ENCODE measurements at regions of chr20 and their contacts with region 1.

Region 1: GRCh38 chr20:44683263-44684046 is 31.7 kb upstream of the CCN5 start:
- DNase-seq: no peak
- ATAC-seq: no peak
- H3K4me3 ChIP-seq: no peak overlapping the region
- H3K27ac ChIP-seq: peak overlapping the region; percentile 84; the same call in 1 of the 2 replicates
- H3K4me1 ChIP-seq: peaks cover 16% of the 10 kb centered on the region
- H3K27me3 ChIP-seq: no peaks in the 10 kb centered on the region
- CTCF ChIP-seq: no peak

Region 2: DNA sequence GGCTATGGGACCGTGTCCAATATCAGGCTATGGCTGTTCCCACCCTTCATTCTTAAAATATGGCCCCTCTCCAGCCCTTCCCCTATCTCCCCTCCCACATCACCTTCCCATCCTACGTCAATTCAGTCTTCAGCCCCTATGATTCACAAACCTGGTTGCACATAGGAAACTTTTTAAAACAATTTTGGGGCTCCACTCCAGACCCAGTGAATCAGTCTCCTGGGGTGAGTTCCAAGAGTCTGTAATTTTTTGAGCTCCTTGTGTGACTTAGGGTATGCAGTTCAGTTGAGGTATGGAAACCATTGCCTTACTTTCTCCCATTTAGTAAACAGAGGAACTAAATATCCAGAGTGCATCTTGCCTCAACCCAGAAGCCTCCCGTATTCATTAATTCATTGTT is 322.4 kb before region 1 on chr20:
- CTCF ChIA-PET with region 1: no interaction called
- POLR2A ChIA-PET with region 1: no interaction called
- in situ Hi-C with region 1: no loop called
- intact Hi-C with region 1: no loop called
- DNase-seq: no peak
- ATAC-seq: no peak
- H3K4me3 ChIP-seq: no peak overlapping the region
- H3K27ac ChIP-seq: no peak overlapping the region
- H3K4me1 ChIP-seq: no peaks in the 10 kb centered on the region
- H3K27me3 ChIP-seq: no peaks in the 10 kb centered on the region; the same call in 1 of the 2 replicates
- CTCF ChIP-seq: no peak

Region 3: DNA sequence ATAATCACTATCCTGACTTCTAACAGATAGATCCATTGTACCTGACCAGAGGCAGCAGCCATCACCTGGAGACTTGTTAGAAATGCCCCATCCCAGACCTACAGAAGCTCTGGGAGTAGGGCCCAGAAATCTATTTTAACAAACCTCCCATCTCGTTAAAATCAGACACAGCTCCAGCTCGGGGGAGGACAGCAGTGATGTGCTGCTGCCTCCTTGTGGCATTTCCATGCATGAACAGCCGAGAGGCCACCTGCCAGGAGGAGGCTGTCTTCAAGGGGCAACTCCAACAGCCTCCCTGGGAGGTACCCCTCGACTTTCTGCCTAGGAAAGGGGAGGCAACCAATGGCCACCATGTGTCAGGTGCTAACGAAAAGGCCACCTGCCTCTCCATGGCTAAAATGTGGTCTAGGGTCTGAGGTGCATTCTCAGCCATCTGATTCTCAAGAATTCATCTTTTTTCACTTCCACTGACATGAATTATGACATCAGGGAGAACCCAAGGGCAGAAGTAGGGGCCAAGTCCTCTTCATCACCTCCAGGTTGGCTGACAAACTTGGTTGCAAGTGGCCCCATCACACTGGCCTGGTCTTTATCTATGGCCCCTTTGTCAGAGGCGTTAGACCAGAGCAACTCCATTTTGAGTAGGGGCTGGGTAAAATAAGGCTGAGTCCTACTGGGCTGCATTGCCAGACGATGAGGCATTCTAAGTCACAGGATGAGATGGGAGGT is 50.0 kb after region 1 on chr20:
- CTCF ChIA-PET with region 1: interaction called, 33 read pairs
- POLR2A ChIA-PET with region 1: interaction called, 3 read pairs
- in situ Hi-C with region 1: no loop called
- intact Hi-C with region 1: loop called (anchors 1 kb)
- DNase-seq: peak; percentile 83
- ATAC-seq: peak; percentile 41
- H3K4me3 ChIP-seq: no peak overlapping the region
- H3K27ac ChIP-seq: peak overlapping the region; percentile 99
- H3K4me1 ChIP-seq: peaks cover 53% of the 10 kb centered on the region
- H3K27me3 ChIP-seq: no peaks in the 10 kb centered on the region
- CTCF ChIP-seq: peak; percentile 98

Region 4: GRCh38 chr20:44861531-44862006 is 178.1 kb after region 1 on chr20:
- CTCF ChIA-PET with region 1: no interaction called
- POLR2A ChIA-PET with region 1: no interaction called
- in situ Hi-C with region 1: no loop called
- intact Hi-C with region 1: loop called (anchors 10 kb)
- DNase-seq: no peak
- ATAC-seq: peak; percentile 80
- H3K4me3 ChIP-seq: no peak overlapping the region
- H3K27ac ChIP-seq: no peak overlapping the region
- H3K4me1 ChIP-seq: no peaks in the 10 kb centered on the region
- H3K27me3 ChIP-seq: no peaks in the 10 kb centered on the region
- CTCF ChIP-seq: no peak

Region 5: DNA sequence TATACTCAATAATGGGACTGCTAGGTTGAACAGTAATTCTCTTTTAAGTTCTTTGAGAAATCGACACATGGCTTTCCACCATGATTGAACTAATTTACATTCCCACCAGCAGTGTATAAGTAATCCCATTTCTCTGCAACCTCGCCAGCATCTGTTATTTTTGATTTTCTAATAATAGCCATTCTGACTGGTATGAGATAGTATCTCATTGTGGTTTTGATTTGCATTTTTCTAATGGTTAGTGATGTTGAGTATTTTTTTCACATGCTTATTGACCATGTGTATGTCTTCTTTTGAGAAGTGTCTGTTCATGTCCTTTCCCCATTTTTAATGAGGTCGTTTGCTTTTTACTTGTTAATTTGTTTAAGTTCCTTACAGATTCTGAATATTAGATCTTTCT is 349.3 kb after region 1 on chr20:
- CTCF ChIA-PET with region 1: no interaction called
- POLR2A ChIA-PET with region 1: no interaction called
- in situ Hi-C with region 1: no loop called
- intact Hi-C with region 1: no loop called
- DNase-seq: no peak
- ATAC-seq: no peak
- H3K4me3 ChIP-seq: no peak overlapping the region
- H3K27ac ChIP-seq: no peak overlapping the region
- H3K4me1 ChIP-seq: no peaks in the 10 kb centered on the region; the same call in 1 of the 2 replicates
- H3K27me3 ChIP-seq: no peaks in the 10 kb centered on the region
- CTCF ChIP-seq: no peak